Heart right ventricle (tissue), 16 donors: ENCODE measurements at regions of chr3 and their contacts with region 1.

Region 1: GRCh38 chr3:64163755-64164148 is 61.5 kb downstream of the PRICKLE2 start:
- DNase-seq: no peak
- ATAC-seq: no peak
- H3K4me3 ChIP-seq: no peak overlapping the region
- H3K27ac ChIP-seq: peak overlapping the region in 2 of 10 donors; percentile 29 to 69
- H3K4me1 ChIP-seq: peaks cover 0 to 63% (median 34%) of the 10 kb centered on the region in 9 donors
- H3K27me3 ChIP-seq: no peaks in the 10 kb centered on the region
- CTCF ChIP-seq: no peak

Region 2: GRCh38 chr3:64039981-64040733 is 123.6 kb before region 1 on chr3:
- intact Hi-C with region 1: loop called in 4 of 10 experiments (anchors 5 to 10 kb)
- DNase-seq: no peak
- ATAC-seq: peak in 2 of 8 donors; percentile 35 to 46
- H3K4me3 ChIP-seq: no peak overlapping the region
- H3K27ac ChIP-seq: no peak overlapping the region
- H3K4me1 ChIP-seq: no peaks in the 10 kb centered on the region
- H3K27me3 ChIP-seq: peaks cover 0 to 15% (median 0%) of the 10 kb centered on the region in 7 donors
- CTCF ChIP-seq: no peak

Region 3: DNA sequence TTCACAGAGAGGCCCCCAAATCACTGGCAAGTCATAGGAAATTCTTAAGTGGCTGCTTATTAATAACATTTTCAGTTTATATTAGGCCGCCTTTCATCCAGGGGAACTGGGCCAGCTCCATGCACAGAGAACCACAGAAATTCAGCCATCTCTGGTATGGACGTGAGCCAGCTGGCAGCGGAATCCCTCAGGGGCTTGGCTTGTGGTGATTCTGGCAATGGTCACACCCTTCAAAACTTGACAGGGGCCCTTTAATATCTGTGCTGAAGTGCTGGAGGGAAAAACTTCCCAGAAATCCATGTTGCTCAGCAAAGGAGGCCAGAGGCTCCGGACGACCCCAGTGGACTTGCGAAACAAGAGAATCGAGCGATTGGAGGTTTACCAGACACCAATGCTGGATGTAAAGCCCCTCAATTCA is 50.2 kb after region 1 on chr3:
- intact Hi-C with region 1: loop called in 1 of 10 experiments (anchors 5 kb)
- DNase-seq: peak; percentile 83
- ATAC-seq: peak; percentile 53 to 77 (median 70)
- H3K4me3 ChIP-seq: peak overlapping the region in 9 of 10 donors; percentile 9 to 42 (median 27)
- H3K27ac ChIP-seq: peak overlapping the region; percentile 26 to 87 (median 76)
- H3K4me1 ChIP-seq: peaks cover 16 to 90% (median 62%) of the 10 kb centered on the region in 9 donors
- H3K27me3 ChIP-seq: no peaks in the 10 kb centered on the region
- CTCF ChIP-seq: no peak